ENCODE measurements at regions of chr1 and their contacts with region 1.

Region 1: GRCh38 chr1:44909901-44910544 is 67.0 kb upstream of the PTCH2 start:
- DNase-seq: no peak
- H3K4me3 Mint-ChIP-seq: no peak overlapping the region
- H3K27ac Mint-ChIP-seq: no peak overlapping the region
- H3K4me1 Mint-ChIP-seq: no peaks in the 10 kb centered on the region
- H3K27me3 Mint-ChIP-seq: no peaks in the 10 kb centered on the region

Region 2: GRCh38 chr1:44862829-44863401 is 47.1 kb before region 1 on chr1:
- CTCF ChIA-PET with region 1: interaction called, 5 read pairs
- POLR2A ChIA-PET with region 1: interaction called, 10 read pairs
- DNase-seq: no peak
- H3K4me3 Mint-ChIP-seq: no peak overlapping the region
- H3K27ac Mint-ChIP-seq: no peak overlapping the region
- H3K4me1 Mint-ChIP-seq: no peaks in the 10 kb centered on the region
- H3K27me3 Mint-ChIP-seq: no peaks in the 10 kb centered on the region

Region 3: DNA sequence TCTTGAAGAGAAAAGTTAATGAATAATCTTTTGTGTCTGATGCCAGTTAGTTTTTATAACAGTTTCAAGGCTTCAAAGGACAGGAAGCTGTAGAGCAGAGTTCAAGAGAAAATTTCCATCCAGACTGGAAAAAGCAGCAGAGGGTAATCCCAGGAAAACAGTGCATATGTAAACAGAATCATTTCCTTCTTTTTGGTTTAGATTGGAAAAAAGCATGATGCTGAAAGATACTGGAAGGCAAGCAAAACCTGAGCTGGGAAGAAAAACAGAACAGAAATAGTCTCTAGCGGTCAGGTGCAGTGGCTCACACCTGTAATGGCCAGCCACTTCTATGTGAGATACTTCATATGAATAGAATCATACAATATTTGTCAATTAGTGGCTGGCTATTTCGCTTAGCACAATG is 224.4 kb after region 1 on chr1:
- CTCF ChIA-PET with region 1: no interaction called
- POLR2A ChIA-PET with region 1: no interaction called
- DNase-seq: no peak
- H3K4me3 Mint-ChIP-seq: no peak overlapping the region
- H3K27ac Mint-ChIP-seq: no peak overlapping the region
- H3K4me1 Mint-ChIP-seq: no peaks in the 10 kb centered on the region
- H3K27me3 Mint-ChIP-seq: peaks cover 3% of the 10 kb centered on the region

Measured in activated CD4-positive, alpha-beta T cell treated with anti-CD3 and anti-CD28 coated beads, Interleukin-2, amount 10 ng/mL, durations not matched to agents 7 days and 5 days (primary cell).